Activated T-helper 2 cell treated with anti-CD3 and anti-CD28 coated beads, Interferon-gamma antibody, Interleukin-2, Interleukin-4, amounts not matched to agents 10 μg/mL and 5 μg/mL and 100 μg/mL, durations not matched to agents 14 hours and 24 hours and 36 hours (primary cell): ENCODE measurements at regions of chr10 and their contacts with region 1.

Region 1: DNA sequence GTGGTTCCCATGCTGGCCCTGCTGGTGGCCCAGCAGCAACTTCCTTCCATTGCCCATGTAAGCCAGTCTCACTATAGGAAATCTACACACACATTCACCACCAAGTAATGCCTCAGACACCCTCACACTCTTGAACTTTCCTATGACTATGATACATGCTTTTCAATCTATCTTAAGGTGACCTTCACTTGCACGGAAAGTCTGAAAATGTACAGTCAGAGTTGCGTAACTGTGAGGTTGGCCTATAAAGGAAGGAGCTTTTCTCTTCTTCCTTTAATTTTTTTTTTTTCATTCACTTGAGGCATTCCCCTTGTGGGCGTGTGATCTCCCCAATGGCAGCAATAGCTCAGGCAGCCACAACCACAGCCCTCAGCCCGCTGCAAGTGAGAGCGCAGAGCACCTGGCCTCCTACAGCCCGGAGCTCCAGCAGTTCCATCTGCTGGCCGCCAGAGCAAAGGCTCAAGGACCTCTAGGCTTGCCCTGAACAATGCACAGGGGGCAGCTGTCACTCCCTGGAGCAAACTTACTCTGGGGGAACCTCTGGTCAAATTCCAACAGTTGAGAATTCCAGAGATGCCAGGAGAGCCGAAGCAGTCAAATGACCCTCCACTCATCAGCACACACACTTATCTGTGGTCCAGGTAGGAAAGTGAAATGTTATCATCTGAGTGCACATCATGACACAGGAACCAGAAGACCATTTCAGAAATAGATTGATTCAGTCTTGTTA is 123.1 kb upstream of the ADO start:
- DNase-seq: peak; percentile 63
- H3K4me3 Mint-ChIP-seq: no peak overlapping the region
- H3K27ac Mint-ChIP-seq: peak overlapping the region; percentile 58
- H3K4me1 Mint-ChIP-seq: peaks cover 45% of the 10 kb centered on the region
- H3K27me3 Mint-ChIP-seq: no peaks in the 10 kb centered on the region

Region 2: DNA sequence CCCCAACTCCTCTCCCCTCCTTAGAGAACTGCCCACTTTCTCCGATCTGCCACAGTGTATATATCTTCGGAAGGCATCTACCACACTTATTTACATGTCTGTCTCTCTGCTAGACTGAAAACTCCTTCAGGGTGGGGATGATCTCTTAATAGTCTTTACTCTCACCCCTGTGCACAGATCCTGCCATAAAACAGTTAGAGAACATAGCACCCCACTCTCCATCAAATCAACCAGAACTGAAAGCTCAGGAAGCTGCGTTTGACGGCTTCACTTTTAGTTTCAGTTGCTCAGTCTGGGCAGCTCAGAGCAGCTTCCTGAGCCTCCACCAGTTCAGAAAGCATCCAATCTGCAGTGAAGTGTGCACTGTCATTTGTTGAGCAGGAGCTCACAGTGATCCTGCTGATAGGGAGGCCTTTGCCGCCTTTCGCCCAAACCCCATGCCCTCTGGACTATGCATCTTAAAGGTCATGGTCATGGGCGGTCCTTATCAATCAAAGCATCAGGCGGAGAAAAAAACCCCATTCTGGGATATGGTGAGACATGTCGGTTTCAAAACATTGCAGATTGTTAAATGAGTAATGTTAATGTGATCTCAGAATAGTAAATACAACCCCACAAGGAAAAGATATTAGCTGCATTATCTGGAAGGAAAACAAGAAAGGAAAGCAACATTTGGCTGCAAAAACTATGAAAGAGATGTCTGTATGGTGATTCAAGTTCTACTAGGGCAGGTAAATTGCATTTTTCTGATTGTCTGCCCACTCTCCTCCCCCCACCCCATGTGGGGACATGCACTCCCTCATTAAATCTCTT is 43.9 kb before region 1 on chr10:
- intact Hi-C with region 1: loop called (anchors 1 kb)
- DNase-seq: peak; percentile 75
- H3K4me3 Mint-ChIP-seq: no peak overlapping the region
- H3K27ac Mint-ChIP-seq: no peak overlapping the region
- H3K4me1 Mint-ChIP-seq: peaks cover 37% of the 10 kb centered on the region
- H3K27me3 Mint-ChIP-seq: no peaks in the 10 kb centered on the region

Region 3: GRCh38 chr10:62653254-62653653 is 28.1 kb before region 1 on chr10:
- intact Hi-C with region 1: loop called (anchors 1 kb)
- DNase-seq: no peak
- H3K4me3 Mint-ChIP-seq: no peak overlapping the region
- H3K27ac Mint-ChIP-seq: no peak overlapping the region
- H3K4me1 Mint-ChIP-seq: peaks cover 42% of the 10 kb centered on the region
- H3K27me3 Mint-ChIP-seq: no peaks in the 10 kb centered on the region

Region 4: DNA sequence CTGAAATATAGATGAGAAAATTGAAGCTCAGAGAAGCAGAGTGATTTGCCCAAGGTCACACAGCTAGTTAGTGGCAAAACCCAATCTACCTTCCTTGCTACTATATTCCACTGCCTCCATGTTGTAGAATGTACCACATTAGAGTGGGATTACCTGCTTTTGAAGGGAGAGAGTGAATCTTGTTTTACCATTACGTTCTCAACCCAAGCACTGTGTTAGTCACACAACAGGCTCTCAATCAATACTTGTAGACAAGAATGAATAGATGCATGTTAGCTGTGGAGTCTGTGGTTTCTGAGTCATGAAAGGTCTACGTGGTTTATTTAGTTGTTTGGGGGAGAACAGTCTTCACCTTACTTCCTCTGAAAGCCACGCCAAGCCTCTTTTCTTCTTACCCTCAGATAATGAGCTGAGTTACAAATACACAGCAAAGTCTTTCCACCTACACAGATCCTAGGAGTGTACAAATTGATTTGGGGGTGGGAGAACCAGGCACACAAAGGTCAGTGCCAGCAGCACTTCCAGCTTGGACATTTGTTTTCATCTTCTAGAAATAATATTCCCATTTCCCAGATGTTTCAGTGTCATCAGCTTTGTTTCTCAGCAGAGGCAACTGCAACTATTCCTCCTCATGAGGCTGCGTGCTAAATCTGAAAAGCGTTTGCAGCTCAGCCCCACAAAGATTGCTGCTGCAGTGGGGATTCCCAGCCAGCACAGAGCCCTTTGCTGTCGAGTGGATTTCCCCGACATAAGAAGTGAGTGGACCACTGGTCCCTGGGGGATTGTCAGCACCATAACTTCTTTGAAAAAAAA is 51.7 kb after region 1 on chr10:
- intact Hi-C with region 1: loop called (anchors 1 kb)
- DNase-seq: peak; percentile 51
- H3K4me3 Mint-ChIP-seq: peak overlapping the region; percentile 56
- H3K27ac Mint-ChIP-seq: no peak overlapping the region
- H3K4me1 Mint-ChIP-seq: peaks cover 23% of the 10 kb centered on the region
- H3K27me3 Mint-ChIP-seq: no peaks in the 10 kb centered on the region

Region 5: GRCh38 chr10:62788861-62789467 is 107.6 kb after region 1 on chr10:
- intact Hi-C with region 1: no loop called
- DNase-seq: no peak
- H3K4me3 Mint-ChIP-seq: no peak overlapping the region
- H3K27ac Mint-ChIP-seq: no peak overlapping the region
- H3K4me1 Mint-ChIP-seq: no peaks in the 10 kb centered on the region
- H3K27me3 Mint-ChIP-seq: peaks cover 23% of the 10 kb centered on the region

Region 6: DNA sequence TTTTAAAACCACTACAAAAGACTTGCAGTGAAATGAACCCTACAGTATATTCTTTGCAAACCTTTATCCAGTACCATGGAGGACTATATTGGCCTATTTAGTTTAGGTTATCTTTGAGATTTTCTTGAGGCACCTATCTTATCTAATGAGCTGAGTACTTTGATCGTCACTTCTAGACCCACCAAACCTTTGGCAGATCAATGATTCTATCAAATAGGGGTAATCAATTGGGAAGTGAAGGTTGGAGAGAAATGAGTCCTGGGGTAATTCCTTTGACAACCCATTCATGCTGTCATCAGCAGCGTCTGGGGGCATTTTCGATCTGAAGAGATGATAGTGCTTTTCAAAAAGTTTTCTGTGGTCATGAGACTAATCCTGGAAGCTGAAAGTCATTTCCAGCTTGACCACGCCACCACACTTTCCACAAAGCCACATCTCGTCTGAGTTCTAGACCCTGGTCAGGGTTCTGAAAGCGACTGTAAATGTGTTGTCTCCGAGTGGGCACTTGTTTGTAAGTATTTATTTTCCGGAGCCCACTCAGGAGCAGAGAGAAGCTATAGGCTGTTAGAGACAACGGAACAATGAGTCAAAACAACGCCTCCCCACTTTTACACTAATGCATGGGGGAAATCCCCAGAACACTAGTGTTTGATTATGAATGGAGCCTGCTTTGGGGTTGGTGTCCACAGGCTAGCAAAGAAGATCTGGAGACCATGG is 129.9 kb after region 1 on chr10:
- intact Hi-C with region 1: loop called (anchors 1 kb)
- DNase-seq: peak; percentile 58
- H3K4me3 Mint-ChIP-seq: peak overlapping the region; percentile 97
- H3K27ac Mint-ChIP-seq: peak overlapping the region; percentile 83
- H3K4me1 Mint-ChIP-seq: peaks cover 67% of the 10 kb centered on the region
- H3K27me3 Mint-ChIP-seq: peaks cover 2% of the 10 kb centered on the region

Region 7: GRCh38 chr10:63083904-63084689 is 402.7 kb after region 1 on chr10:
- intact Hi-C with region 1: loop called (anchors 10 kb)
- DNase-seq: peak; percentile 16
- H3K4me3 Mint-ChIP-seq: no peak overlapping the region
- H3K27ac Mint-ChIP-seq: no peak overlapping the region
- H3K4me1 Mint-ChIP-seq: peaks cover 12% of the 10 kb centered on the region
- H3K27me3 Mint-ChIP-seq: peaks cover 23% of the 10 kb centered on the region